CD8-positive, alpha-beta memory T cell (primary cell): ENCODE measurements at regions of chr9 and their contacts with region 1.

Region 1: DNA sequence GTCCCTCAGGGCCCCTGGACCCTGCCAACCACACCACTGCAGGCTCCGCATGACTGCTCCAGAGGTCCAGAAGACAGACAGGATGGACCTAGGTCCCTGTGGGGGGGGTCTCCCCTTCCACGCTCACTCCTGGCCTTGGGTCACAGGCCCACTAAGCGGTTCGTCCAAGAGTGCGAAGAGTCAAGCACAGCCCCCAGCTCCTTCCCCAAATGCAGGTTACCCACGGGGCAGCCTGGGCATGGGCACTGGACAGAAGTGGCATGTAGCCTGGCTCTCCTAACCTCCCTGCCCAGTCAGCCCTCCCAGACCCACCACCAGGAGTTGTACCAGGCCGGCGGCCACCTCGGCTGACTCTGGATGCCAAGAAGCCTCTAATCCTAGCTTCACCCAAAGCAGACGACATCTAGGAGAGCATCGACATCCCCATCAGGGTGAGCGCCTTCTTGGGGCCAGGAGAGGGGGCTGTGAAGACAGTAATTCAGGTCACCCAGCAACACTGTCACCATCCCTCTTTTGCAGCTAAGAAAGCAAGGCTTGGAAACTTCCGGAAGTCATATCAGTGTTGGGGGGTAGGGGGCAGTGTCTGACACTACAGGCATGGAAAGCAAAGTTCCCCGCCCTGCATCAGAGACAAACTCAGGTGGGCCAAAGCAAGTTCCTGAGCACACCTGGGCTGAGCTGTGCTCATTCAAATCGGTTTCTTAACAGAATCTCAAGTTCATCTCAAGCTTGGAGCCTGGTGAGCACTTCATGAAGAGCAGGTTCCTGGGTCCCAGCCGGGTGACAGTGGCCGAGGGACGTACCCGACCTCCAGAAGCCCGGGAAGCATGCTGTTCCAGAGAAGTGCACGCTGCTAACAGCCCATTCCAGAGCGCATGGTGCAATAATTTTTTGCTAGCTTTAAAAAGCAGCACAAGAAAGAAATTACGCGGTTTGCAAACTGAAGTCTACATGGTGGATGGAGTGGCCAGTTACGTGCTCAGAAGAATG is 68.7 kb downstream of the SEMA4D start:
- DNase-seq: peak in 4 of 5 donors; percentile 51 to 79 (median 72)
- H3K4me3 ChIP-seq: no peak overlapping the region
- H3K4me3 Mint-ChIP-seq: peak overlapping the region; percentile 7 to 66 (median 50)
- H3K27ac ChIP-seq: no peak overlapping the region
- H3K27ac Mint-ChIP-seq: peak overlapping the region; percentile 64 to 96 (median 92)
- H3K4me1 ChIP-seq: peaks cover 94% of the 10 kb centered on the region
- H3K4me1 Mint-ChIP-seq: peaks cover 86 to 100% (median 94%) of the 10 kb centered on the region in 3 donors
- H3K27me3 ChIP-seq: no peaks in the 10 kb centered on the region
- H3K27me3 Mint-ChIP-seq: peaks cover 0 to 1% of the 10 kb centered on the region in 2 donors

Region 2: DNA sequence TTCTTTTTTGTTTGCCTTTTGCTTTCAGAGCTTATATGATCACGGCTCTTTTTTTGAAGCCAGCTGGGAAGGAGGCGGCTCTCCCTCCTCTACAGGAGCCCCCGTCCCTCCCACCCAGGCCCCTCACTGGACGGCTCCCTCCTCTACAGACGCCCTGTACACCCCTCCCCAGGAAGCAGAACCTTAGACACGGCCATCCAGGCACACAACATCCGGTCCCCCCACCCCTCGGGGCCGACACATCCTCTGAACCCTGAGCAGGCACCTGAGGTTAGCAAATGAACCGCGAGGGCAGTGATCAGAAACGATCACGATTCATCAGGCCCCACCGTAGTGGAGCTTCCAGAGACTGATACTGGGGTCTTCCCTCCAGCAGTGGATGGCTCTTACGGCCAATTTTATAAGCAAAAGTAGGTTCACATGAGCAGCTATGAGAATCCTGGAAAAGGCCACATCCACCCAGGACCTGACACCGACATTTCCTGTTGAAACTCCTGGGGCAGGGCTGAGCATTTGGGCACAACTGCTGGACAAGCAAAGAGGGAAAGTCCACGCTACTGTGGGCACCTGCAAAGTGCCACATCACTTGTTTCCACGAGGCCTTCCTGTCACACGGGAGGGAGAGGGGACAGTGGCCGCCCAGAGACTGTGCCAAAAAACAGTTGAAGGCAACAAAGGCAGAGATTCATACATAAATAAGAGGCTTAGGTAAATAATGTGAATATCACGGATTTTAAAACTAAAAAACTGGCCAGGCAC is 10.1 kb before region 1 on chr9:
- CTCF ChIA-PET with region 1: interaction called, 24 read pairs
- POLR2A ChIA-PET with region 1: interaction called, 3 read pairs
- DNase-seq: peak; percentile 59 to 87 (median 74)
- H3K4me3 ChIP-seq: peak overlapping the region; percentile 35
- H3K4me3 Mint-ChIP-seq: peak overlapping the region; percentile 59 to 90 (median 84)
- H3K27ac ChIP-seq: peak overlapping the region; percentile 59
- H3K27ac Mint-ChIP-seq: peak overlapping the region; percentile 89 to 99 (median 97)
- H3K4me1 ChIP-seq: peaks cover 82% of the 10 kb centered on the region
- H3K4me1 Mint-ChIP-seq: peaks cover 82 to 98% (median 97%) of the 10 kb centered on the region in 3 donors
- H3K27me3 ChIP-seq: no peaks in the 10 kb centered on the region
- H3K27me3 Mint-ChIP-seq: no peaks in the 10 kb centered on the region

Region 3: DNA sequence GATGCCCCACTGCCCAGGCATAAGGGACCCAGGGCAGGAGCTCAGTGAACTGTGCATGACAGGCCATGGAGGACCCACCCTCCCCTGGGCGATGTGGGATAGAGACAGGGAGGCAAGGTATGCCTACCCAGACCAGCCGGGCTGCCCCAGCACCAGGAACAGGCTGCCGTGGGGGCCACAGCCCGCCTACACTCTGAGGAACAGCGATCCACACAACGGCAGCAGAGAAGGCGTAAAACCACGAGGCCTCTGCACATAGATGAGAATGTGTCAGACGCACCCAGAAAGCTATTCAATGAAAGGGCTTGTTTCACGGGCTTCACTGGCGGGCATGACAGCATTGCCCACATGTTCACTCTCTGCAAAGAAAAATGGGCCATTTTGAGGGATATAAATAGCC is 19.2 kb after region 1 on chr9:
- CTCF ChIA-PET with region 1: interaction called, 30 read pairs
- POLR2A ChIA-PET with region 1: interaction called, 3 read pairs
- DNase-seq: peak in 3 of 5 donors; percentile 45 to 74 (median 55)
- H3K4me3 ChIP-seq: peak overlapping the region; percentile 39
- H3K4me3 Mint-ChIP-seq: peak overlapping the region; percentile 6 to 80 (median 75)
- H3K27ac ChIP-seq: no peak overlapping the region
- H3K27ac Mint-ChIP-seq: peak overlapping the region; percentile 85 to 98 (median 94)
- H3K4me1 ChIP-seq: peaks cover 90% of the 10 kb centered on the region
- H3K4me1 Mint-ChIP-seq: peaks cover 87 to 96% (median 93%) of the 10 kb centered on the region in 3 donors
- H3K27me3 ChIP-seq: no peaks in the 10 kb centered on the region
- H3K27me3 Mint-ChIP-seq: peaks cover 0 to 2% of the 10 kb centered on the region in 2 donors

Region 4: DNA sequence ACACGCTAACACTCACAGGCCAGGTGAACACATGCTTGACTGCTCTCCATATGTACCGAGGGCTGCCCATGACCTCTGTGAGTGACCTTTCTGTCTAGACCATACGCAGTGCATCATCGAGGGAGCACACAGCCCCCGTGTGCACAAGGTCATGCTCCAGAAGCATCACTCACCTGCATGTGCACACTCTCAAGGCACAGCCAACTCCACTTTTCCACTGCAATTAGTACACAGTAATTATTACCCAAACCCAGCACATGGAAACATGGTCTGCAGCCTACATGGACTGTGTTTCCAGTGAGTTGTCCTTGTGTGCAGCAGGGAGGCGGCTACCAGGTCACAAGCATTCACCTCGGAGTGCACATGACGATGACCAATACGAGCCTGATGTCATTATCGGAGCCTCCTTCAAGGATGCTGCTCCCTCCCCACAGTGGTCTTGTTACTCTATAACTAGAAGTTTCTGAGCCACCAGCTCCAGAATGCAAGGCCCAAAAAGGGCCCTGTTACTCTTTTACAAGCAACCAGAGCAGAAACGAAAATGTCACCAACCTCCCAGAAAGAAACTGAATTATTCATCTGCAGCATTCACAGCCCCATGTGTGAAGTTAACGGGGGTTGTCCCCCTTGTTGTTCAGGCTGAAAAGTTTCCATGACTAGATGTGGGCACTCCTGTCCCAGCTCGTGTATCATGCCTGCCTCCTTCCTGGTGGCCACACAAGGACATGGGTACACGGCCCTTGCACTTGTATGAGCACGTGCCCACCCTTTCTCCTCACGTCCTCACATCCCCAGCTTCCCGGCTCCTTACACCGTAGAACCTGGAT is 37.5 kb after region 1 on chr9:
- CTCF ChIA-PET with region 1: interaction called, 10 read pairs
- POLR2A ChIA-PET with region 1: interaction called, 4 read pairs
- DNase-seq: peak in 1 of 5 donors; percentile 71
- H3K4me3 ChIP-seq: peak overlapping the region; percentile 33
- H3K4me3 Mint-ChIP-seq: peak overlapping the region; percentile 40 to 89 (median 79)
- H3K27ac ChIP-seq: peak overlapping the region; percentile 35
- H3K27ac Mint-ChIP-seq: peak overlapping the region; percentile 89 to 97 (median 95)
- H3K4me1 ChIP-seq: peaks cover 99% of the 10 kb centered on the region
- H3K4me1 Mint-ChIP-seq: peaks cover 96 to 99% (median 98%) of the 10 kb centered on the region in 3 donors
- H3K27me3 ChIP-seq: no peaks in the 10 kb centered on the region
- H3K27me3 Mint-ChIP-seq: peaks cover 0 to 2% of the 10 kb centered on the region in 2 donors

Region 5: DNA sequence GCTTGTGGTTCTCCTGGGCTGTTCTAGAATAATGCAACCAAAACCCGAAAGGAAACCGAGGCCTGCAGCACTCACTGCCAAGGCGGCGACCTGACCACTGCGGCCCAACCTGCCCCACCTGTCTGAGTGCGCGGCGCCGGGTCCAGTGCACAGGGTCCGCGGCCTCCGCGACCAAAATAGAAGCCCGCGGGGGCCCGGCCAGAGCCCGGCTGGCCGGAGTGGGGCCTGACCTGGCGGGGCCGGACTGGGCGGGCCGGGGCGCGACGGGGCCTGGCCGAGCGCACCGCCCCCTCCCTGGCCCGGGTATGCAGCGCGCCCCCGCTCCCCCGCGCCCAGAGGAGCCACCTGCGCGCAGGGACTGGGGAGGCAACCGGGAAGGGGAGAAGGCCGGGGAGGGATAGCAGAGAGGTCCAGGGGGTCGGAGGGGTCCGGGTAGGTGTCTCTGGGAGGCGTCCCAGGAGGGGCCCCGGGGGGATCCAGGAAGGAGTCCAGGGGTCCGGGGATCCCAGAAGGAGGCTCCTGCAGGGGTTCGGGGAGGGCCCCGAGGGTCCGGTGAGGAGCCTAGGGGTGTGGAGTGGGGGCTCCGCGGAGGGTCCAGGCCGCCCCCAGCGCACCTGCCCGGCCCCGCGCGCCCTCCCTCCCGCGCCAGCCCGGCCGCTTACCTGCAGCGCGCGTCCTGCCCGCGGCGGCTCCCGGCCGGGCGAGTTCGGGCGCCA is 68.2 kb after region 1 on chr9:
- CTCF ChIA-PET with region 1: interaction called, 11 read pairs
- POLR2A ChIA-PET with region 1: interaction called, 3 read pairs
- DNase-seq: peak in 3 of 5 donors; percentile 46 to 71 (median 58)
- H3K4me3 ChIP-seq: peak overlapping the region; percentile 82
- H3K4me3 Mint-ChIP-seq: peak overlapping the region; percentile 92 to 99 (median 94)
- H3K27ac ChIP-seq: peak overlapping the region; percentile 60
- H3K27ac Mint-ChIP-seq: peak overlapping the region; percentile 81 to 98 (median 94)
- H3K4me1 ChIP-seq: peaks cover 84% of the 10 kb centered on the region
- H3K4me1 Mint-ChIP-seq: peaks cover 84 to 90% (median 88%) of the 10 kb centered on the region in 3 donors
- H3K27me3 ChIP-seq: no peaks in the 10 kb centered on the region
- H3K27me3 Mint-ChIP-seq: peaks cover 0 to 4% of the 10 kb centered on the region in 2 donors